Breast epithelium (tissue), 4 donors: ENCODE measurements at regions of chr17 and their contacts with region 1.

Region 1: DNA sequence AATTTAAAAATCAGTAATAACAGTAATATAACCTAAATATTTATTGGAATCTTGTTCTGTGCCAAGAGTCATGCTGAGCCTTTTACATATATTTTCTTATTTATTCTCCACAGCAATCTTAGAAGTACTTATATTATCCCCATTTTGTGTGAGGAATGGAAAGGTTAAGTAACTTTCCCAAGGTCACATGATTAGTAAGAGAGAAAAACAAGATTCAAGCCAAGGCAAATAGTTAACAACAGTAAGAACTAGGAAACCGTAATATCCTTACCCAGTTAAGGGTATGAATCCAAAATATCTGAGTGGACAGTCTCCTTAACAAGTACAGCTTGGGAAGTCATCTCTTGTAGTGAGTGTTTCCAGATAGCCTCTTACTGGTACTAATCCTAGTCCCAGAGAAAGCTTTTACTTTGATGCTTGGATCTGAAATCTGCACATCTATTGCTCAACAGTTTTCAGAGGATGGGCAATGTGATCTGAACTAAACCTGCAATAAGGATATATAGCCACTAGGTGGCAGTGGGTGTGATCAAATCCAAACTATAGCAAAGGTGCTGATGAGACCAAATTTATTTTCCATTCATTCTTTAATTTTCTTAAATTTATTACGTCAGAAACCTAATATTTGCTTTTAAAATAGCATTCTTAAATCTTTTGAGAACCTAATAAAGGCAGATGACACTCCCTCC is 23.3 kb downstream of the SHISA6 start:
- DNase-seq: no peak
- H3K4me3 ChIP-seq: no peak overlapping the region
- H3K27ac ChIP-seq: no peak overlapping the region
- H3K4me1 ChIP-seq: no peaks in the 10 kb centered on the region
- H3K27me3 ChIP-seq: no peaks in the 10 kb centered on the region
- CTCF ChIP-seq: peak in 1 of 3 donors; percentile 14
- POLR2A ChIP-seq: no peak

Region 2: GRCh38 chr17:11195801-11196200 is 68.5 kb before region 1 on chr17:
- intact Hi-C with region 1: loop called (anchors 2 kb)
- DNase-seq: no peak
- H3K4me3 ChIP-seq: no peak overlapping the region
- H3K27ac ChIP-seq: no peak overlapping the region
- H3K4me1 ChIP-seq: no peaks in the 10 kb centered on the region
- H3K27me3 ChIP-seq: no peaks in the 10 kb centered on the region
- CTCF ChIP-seq: no peak
- POLR2A ChIP-seq: no peak

Region 3: GRCh38 chr17:11278186-11278991 is 14.1 kb after region 1 on chr17:
- intact Hi-C with region 1: no loop called
- DNase-seq: no peak
- H3K4me3 ChIP-seq: no peak overlapping the region
- H3K27ac ChIP-seq: peak overlapping the region in 1 of 2 donors; percentile 62
- H3K4me1 ChIP-seq: no peaks in the 10 kb centered on the region
- H3K27me3 ChIP-seq: no peaks in the 10 kb centered on the region
- CTCF ChIP-seq: no peak
- POLR2A ChIP-seq: no peak